ENCODE measurements at regions of chr3 and their contacts with region 1.

Region 1: DNA sequence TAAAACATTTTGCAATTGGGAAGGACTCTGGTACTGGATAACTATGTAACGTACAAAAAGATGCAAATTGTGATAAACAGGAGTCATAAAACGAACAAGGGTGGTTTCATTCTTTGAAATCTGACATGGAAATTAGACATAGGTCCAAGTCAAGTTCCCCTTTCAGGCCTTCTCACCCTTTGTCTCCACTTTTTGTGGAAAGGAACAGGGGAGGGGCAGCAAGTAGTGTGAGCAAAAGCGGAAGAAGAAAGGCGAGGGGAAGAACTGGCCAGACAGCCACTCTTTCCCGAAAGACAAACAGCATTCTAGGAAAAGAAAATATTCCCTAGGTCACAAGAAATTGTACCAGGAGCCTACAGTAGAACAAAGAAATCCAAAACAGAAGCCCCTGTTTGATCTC is 52.6 kb downstream of the MCF2L2 start:
- DNase-seq: no peak
- ATAC-seq: no peak
- H3K4me3 ChIP-seq: no peak overlapping the region
- H3K27ac ChIP-seq: no peak overlapping the region
- H3K4me1 ChIP-seq: peaks cover 55% of the 10 kb centered on the region
- H3K27me3 ChIP-seq: no peaks in the 10 kb centered on the region
- CTCF ChIP-seq: no peak

Region 2: GRCh38 chr3:182325213-182325941 is 1050.4 kb before region 1 on chr3:
- CTCF ChIA-PET with region 1: no interaction called
- POLR2A ChIA-PET with region 1: interaction called, 12 read pairs
- intact Hi-C with region 1: no loop called
- DNase-seq: peak; percentile 45
- ATAC-seq: no peak
- H3K4me3 ChIP-seq: no peak overlapping the region
- H3K27ac ChIP-seq: no peak overlapping the region
- H3K4me1 ChIP-seq: peaks cover 46% of the 10 kb centered on the region
- H3K27me3 ChIP-seq: no peaks in the 10 kb centered on the region
- CTCF ChIP-seq: no peak

Region 3: GRCh38 chr3:183274609-183275008 is 101.2 kb before region 1 on chr3:
- CTCF ChIA-PET with region 1: no interaction called
- POLR2A ChIA-PET with region 1: interaction called, 14 read pairs
- intact Hi-C with region 1: no loop called
- DNase-seq: peak; percentile 90
- ATAC-seq: peak; percentile 53
- H3K4me3 ChIP-seq: peak overlapping the region; percentile 37; the same call in 1 of the 2 replicates
- H3K27ac ChIP-seq: peak overlapping the region; percentile 89
- H3K4me1 ChIP-seq: peaks cover 78% of the 10 kb centered on the region
- H3K27me3 ChIP-seq: no peaks in the 10 kb centered on the region
- CTCF ChIP-seq: no peak

Region 4: DNA sequence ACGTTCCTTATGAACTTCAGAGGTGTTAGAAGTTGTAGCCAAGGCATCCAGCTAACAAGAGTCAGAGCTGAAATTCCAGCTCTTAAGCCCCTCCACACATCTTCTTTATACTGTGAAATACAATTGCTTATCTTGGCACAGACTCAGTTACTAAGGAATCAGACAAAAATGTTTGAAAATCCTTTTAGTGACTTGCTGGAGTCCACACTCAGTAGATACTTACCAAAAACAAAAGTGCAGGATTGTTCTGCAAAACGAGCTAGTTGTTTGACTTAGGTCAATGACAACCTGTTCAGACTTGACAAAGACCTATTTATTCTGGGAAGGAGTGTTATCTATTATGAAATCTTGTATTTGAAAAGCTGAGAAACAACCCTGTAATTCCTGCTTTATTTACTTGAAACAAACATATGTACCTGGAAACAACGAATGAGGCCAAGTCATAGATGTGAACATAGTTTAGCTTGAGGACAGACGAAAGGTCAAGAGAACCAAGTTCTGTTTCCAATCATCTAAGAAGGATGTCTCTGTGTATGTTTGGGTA is 84.2 kb before region 1 on chr3:
- CTCF ChIA-PET with region 1: interaction called, 12 read pairs
- POLR2A ChIA-PET with region 1: interaction called, 12 read pairs
- intact Hi-C with region 1: no loop called
- DNase-seq: peak; percentile 81
- ATAC-seq: peak; percentile 66
- H3K4me3 ChIP-seq: no peak overlapping the region
- H3K27ac ChIP-seq: peak overlapping the region; percentile 88
- H3K4me1 ChIP-seq: peaks cover 55% of the 10 kb centered on the region
- H3K27me3 ChIP-seq: no peaks in the 10 kb centered on the region
- CTCF ChIP-seq: no peak

Region 5: DNA sequence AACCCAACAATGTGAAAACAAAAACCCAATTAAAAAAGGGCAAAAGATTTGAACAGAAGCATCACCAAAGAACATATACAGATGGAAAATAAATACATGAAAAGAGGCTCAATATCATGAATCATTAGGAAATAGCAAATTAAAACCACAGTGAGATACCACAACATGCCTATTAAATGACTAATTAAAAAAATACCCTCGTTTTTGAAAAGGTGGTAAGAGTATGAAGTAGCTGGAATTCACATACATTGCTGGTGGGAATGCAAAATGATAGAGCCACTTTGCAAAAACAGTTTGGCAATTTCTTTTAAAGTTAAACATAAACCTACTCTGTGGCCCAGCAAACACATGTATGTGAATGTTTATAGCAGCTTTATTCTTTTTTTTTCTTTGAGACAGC is 47.0 kb before region 1 on chr3:
- CTCF ChIA-PET with region 1: no interaction called
- POLR2A ChIA-PET with region 1: interaction called, 4 read pairs
- intact Hi-C with region 1: loop called (anchors 1 kb)
- DNase-seq: peak; percentile 56
- ATAC-seq: peak; percentile 11
- H3K4me3 ChIP-seq: no peak overlapping the region
- H3K27ac ChIP-seq: peak overlapping the region; percentile 17; the same call in 1 of the 2 replicates
- H3K4me1 ChIP-seq: peaks cover 42% of the 10 kb centered on the region
- H3K27me3 ChIP-seq: no peaks in the 10 kb centered on the region
- CTCF ChIP-seq: no peak

Region 6: DNA sequence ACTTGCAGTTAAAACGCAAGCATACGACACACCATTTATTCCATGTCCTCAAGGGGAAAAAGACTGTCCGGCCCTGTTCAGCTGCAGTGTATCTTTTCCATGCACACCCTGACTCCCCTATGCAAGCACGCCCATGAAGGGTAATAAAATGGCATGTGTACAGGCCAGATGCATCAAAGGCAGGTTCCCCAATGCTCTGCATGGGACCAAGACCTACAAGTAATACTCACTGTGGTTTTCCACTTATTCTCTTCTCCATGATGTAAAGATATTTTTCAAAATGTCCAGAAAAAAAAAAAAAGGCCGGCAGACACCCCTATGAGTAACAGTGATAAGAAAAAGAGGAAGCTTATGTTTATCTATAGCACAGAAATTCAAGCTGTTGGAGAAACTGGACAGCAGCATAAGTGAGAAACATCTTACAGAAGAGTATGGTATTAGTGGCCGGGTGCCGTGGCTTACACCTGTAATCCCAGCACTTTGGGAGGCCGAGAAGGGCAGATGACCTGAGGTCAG is 18.2 kb before region 1 on chr3:
- CTCF ChIA-PET with region 1: no interaction called
- POLR2A ChIA-PET with region 1: no interaction called
- intact Hi-C with region 1: no loop called
- DNase-seq: no peak
- ATAC-seq: no peak
- H3K4me3 ChIP-seq: no peak overlapping the region
- H3K27ac ChIP-seq: no peak overlapping the region
- H3K4me1 ChIP-seq: no peaks in the 10 kb centered on the region
- H3K27me3 ChIP-seq: no peaks in the 10 kb centered on the region
- CTCF ChIP-seq: no peak